Naive thymus-derived CD4-positive, alpha-beta T cell (primary cell): ENCODE measurements at regions of chr19 and their contacts with region 1.

Region 1: GRCh38 chr19:55339048-55339888 is at the start of gene KMT5C:
- DNase-seq: peak; percentile 99 to 100 (median 100)
- ATAC-seq: peak; percentile 83
- H3K4me3 ChIP-seq: peak within 1 kb of the TSS; percentile 80
- H3K4me3 Mint-ChIP-seq: peak within 1 kb of the TSS; percentile 87 to 99 (median 96)
- H3K27ac ChIP-seq: peak within 1 kb of the TSS; percentile 93
- H3K27ac Mint-ChIP-seq: peak within 1 kb of the TSS; percentile 88 to 100 (median 97)
- H3K4me1 ChIP-seq: peaks cover 8 to 15% of the 10 kb centered on the region in 2 donors
- H3K4me1 Mint-ChIP-seq: peaks cover 5 to 28% (median 24%) of the 10 kb centered on the region in 7 donors
- H3K27me3 ChIP-seq: no peaks in the 10 kb centered on the region
- H3K27me3 Mint-ChIP-seq: peaks cover 0 to 16% (median 0%) of the 10 kb centered on the region in 5 donors
- total RNA-seq, gene KMT5C: 21.8 to 63.3 (median 27.2) TPM

Region 2: GRCh38 chr19:54448774-54449700 is 890.2 kb before region 1 on chr19 and contains the start of gene LENG8:
- CTCF ChIA-PET with region 1: no interaction called
- POLR2A ChIA-PET with region 1: no interaction called
- intact Hi-C with region 1: loop called in 1 of 2 experiments (anchors 1 kb)
- DNase-seq: peak; percentile 95 to 99 (median 98)
- ATAC-seq: peak; percentile 94
- H3K4me3 ChIP-seq: peak within 1 kb of the TSS; percentile 85
- H3K4me3 Mint-ChIP-seq: peak within 1 kb of the TSS; percentile 93 to 99 (median 97)
- H3K27ac ChIP-seq: peak within 1 kb of the TSS; percentile 94
- H3K27ac Mint-ChIP-seq: peak within 1 kb of the TSS; percentile 97 to 100 (median 100)
- H3K4me1 ChIP-seq: peaks cover 19 to 39% of the 10 kb centered on the region in 2 donors
- H3K4me1 Mint-ChIP-seq: peaks cover 31 to 61% (median 54%) of the 10 kb centered on the region in 7 donors
- H3K27me3 ChIP-seq: no peaks in the 10 kb centered on the region
- H3K27me3 Mint-ChIP-seq: peaks cover 0 to 3% (median 0%) of the 10 kb centered on the region in 5 donors
- total RNA-seq, gene LENG8: 238 to 685 (median 503) TPM

Region 3: GRCh38 chr19:55279770-55280643 is 59.3 kb before region 1 on chr19 and contains the start of gene HSPBP1:
- CTCF ChIA-PET with region 1: no interaction called
- POLR2A ChIA-PET with region 1: interaction called, 12 read pairs
- intact Hi-C with region 1: loop called (anchors 1 kb)
- DNase-seq: peak; percentile 88 to 96 (median 96)
- ATAC-seq: peak; percentile 92
- H3K4me3 ChIP-seq: peak within 1 kb of the TSS; percentile 91
- H3K4me3 Mint-ChIP-seq: peak within 1 kb of the TSS; percentile 92 to 100 (median 98)
- H3K27ac ChIP-seq: peak within 1 kb of the TSS; percentile 89
- H3K27ac Mint-ChIP-seq: peak within 1 kb of the TSS; percentile 91 to 100 (median 98)
- H3K4me1 ChIP-seq: peaks cover 6 to 32% of the 10 kb centered on the region in 2 donors
- H3K4me1 Mint-ChIP-seq: peaks cover 12 to 52% (median 39%) of the 10 kb centered on the region in 7 donors
- H3K27me3 ChIP-seq: no peaks in the 10 kb centered on the region
- H3K27me3 Mint-ChIP-seq: peaks cover 0 to 9% (median 0%) of the 10 kb centered on the region in 5 donors
- total RNA-seq, gene HSPBP1: 15.0 to 30.0 (median 16.0) TPM

Region 4: DNA sequence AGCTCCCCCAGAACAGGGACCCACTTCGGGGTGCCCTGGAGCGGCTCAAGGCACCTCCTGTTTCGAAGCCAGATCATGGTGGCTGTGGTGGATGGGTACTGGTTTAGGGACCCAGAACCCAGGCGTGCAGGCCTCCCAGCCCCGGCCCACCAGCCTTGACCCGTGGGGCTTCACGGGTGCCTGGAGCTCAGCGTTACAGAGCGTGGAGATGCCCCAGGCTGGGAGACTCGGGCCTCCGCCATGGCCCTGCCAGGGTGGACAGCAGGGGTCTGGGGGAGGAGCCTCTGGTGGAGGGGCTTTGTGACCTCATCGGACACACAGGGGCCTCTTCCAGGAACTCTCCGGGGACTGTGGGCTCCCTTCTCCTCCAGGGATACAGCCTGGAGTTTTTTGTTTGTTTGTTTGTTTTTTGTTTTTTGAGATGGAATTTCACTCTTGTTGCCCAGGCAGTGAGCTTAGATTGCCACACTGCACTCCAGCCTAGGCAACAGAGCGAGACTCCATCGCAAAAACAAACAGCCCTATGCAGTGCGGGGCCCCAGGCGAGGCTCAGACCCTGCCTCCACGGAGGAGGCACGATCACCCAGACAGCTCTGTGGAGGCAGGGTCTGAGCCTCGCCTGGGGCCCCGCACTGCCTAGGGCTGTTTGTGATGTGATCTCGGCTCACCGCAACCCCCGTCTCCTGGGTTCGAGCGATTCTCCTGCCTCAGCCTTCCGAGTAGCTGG is 23.9 kb after region 1 on chr19 and contains the start of gene GARIN5B:
- CTCF ChIA-PET with region 1: no interaction called
- POLR2A ChIA-PET with region 1: no interaction called
- intact Hi-C with region 1: no loop called
- DNase-seq: no peak
- ATAC-seq: no peak
- H3K4me3 ChIP-seq: no peak within 1 kb of the TSS
- H3K4me3 Mint-ChIP-seq: no peak within 1 kb of the TSS
- H3K27ac ChIP-seq: no peak within 1 kb of the TSS
- H3K27ac Mint-ChIP-seq: no peak within 1 kb of the TSS
- H3K4me1 ChIP-seq: no peaks in the 10 kb centered on the region
- H3K4me1 Mint-ChIP-seq: peaks cover 0 to 2% (median 0%) of the 10 kb centered on the region in 7 donors
- H3K27me3 ChIP-seq: no peaks in the 10 kb centered on the region
- H3K27me3 Mint-ChIP-seq: peaks cover 0 to 14% (median 4%) of the 10 kb centered on the region in 5 donors
- total RNA-seq, gene GARIN5B: not detected

Region 5: DNA sequence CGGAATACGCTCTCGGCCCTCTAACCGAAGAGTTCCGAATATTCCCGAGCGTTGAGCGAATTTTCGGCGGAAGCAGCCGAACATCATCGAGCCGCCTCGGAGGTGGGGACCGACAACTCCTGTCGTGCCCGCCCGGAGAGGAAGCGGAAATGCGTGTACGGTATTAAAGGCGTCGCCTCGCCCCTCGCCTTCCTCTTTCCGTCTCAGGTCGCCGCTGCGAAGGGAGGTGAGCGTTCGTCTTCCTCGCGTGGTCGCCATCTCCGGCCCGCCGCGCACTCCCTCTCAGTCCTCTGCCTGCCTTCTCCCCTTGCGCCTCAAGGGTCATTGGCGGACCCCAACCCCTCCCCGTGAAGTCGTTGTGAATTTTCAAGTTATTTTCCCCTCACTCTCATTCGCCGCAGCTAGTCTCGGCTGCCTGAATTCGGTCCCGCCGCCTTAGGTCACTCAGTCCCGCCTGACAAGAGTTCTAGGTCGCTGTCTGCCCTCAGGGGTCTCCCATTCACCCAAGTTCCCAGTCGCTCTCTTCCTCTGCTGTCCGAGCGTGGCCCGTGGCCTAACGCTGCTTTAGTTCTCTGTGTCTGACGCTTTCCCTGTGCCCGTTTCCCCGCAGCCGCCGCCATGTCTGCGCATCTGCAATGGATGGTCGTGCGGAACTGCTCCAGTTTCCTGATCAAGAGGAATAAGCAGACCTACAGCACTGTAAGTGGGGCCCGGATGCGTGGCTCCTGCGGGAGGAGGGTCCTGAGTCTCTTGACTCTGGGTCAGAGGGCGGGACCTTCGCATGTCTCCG is 46.7 kb after region 1 on chr19 and contains the start of gene RPL28:
- CTCF ChIA-PET with region 1: interaction called, 4 read pairs
- POLR2A ChIA-PET with region 1: interaction called, 27 read pairs
- intact Hi-C with region 1: loop called (anchors 1 kb)
- DNase-seq: peak; percentile 92 to 99 (median 99)
- ATAC-seq: peak; percentile 89
- H3K4me3 ChIP-seq: peak within 1 kb of the TSS; percentile 92
- H3K4me3 Mint-ChIP-seq: peak within 1 kb of the TSS; percentile 94 to 100 (median 100)
- H3K27ac ChIP-seq: peak within 1 kb of the TSS; percentile 91
- H3K27ac Mint-ChIP-seq: peak within 1 kb of the TSS; percentile 91 to 100 (median 99)
- H3K4me1 ChIP-seq: peaks cover 45 to 53% of the 10 kb centered on the region in 2 donors
- H3K4me1 Mint-ChIP-seq: peaks cover 41 to 79% (median 70%) of the 10 kb centered on the region in 7 donors
- H3K27me3 ChIP-seq: no peaks in the 10 kb centered on the region
- H3K27me3 Mint-ChIP-seq: peaks cover 0 to 3% (median 0%) of the 10 kb centered on the region in 5 donors
- total RNA-seq, gene RPL28: 2,549 to 3,799 (median 3,242) TPM

Region 6: GRCh38 chr19:55476100-55476775 is 137.0 kb after region 1 on chr19 and contains the start of gene ZNF628:
- CTCF ChIA-PET with region 1: no interaction called
- POLR2A ChIA-PET with region 1: interaction called, 15 read pairs
- intact Hi-C with region 1: loop called (anchors 1 kb)
- DNase-seq: peak; percentile 88 to 98 (median 96)
- ATAC-seq: peak; percentile 96
- H3K4me3 ChIP-seq: peak within 1 kb of the TSS; percentile 96
- H3K4me3 Mint-ChIP-seq: peak within 1 kb of the TSS; percentile 83 to 93 (median 90)
- H3K27ac ChIP-seq: peak within 1 kb of the TSS; percentile 90
- H3K27ac Mint-ChIP-seq: peak within 1 kb of the TSS; percentile 81 to 95 (median 92)
- H3K4me1 ChIP-seq: peaks cover 14 to 15% of the 10 kb centered on the region in 2 donors
- H3K4me1 Mint-ChIP-seq: peaks cover 15 to 41% (median 29%) of the 10 kb centered on the region in 7 donors
- H3K27me3 ChIP-seq: no peaks in the 10 kb centered on the region
- H3K27me3 Mint-ChIP-seq: no peaks in the 10 kb centered on the region
- total RNA-seq, gene ZNF628: 6.6 to 27.2 (median 9.0) TPM

Region 7: DNA sequence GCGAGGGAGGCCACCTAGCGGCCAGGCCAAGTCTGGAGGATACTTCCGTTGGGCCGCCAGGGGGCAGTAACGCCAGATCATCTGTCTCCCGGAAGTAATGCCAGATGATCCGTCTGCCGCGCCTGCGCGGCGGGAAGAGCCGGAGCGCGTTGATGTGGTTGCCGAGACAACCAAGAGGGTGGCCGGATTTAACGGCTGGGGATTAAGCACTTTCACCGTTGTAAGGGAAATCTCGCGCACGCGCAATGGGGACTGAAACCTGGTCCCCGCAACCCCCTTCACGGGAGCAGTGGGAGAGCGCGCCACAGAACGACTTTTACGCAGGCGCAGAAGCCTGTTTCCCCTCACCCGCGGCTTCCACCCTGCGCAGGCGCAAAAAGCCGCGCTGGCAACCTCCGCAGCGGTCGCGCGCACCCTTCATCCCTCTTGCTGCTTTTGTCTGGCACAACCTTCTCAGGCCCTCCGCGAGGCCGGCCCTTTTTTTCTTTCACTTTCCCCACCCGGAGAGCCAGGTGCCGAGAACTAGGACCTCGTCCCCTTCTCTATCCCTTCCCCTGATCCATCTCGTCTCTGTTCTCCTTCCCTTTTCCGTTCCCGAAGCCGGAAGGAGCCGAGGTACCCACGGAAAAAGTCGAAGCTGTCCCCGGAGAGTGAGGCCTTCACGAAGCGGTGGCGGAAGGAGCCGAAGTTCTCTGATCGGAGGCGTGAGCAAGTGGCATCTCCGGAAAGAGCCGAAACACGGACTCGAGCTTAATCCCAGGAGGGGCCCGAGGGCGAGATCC is 314.7 kb after region 1 on chr19:
- CTCF ChIA-PET with region 1: no interaction called
- POLR2A ChIA-PET with region 1: interaction called, 6 read pairs
- intact Hi-C with region 1: loop called (anchors 1 kb)
- DNase-seq: peak; percentile 95 to 100 (median 100)
- ATAC-seq: peak; percentile 83
- H3K4me3 ChIP-seq: peak overlapping the region; percentile 98
- H3K4me3 Mint-ChIP-seq: peak overlapping the region; percentile 83 to 99 (median 96)
- H3K27ac ChIP-seq: peak overlapping the region; percentile 99
- H3K27ac Mint-ChIP-seq: peak overlapping the region; percentile 95 to 100 (median 99)
- H3K4me1 ChIP-seq: peaks cover 30 to 36% of the 10 kb centered on the region in 2 donors
- H3K4me1 Mint-ChIP-seq: peaks cover 29 to 55% (median 39%) of the 10 kb centered on the region in 7 donors
- H3K27me3 ChIP-seq: no peaks in the 10 kb centered on the region
- H3K27me3 Mint-ChIP-seq: peaks cover 0 to 2% (median 0%) of the 10 kb centered on the region in 5 donors